ENCODE measurements at regions of chr2 and their contacts with region 1.

Region 1: GRCh38 chr2:189412330-189412953 is 28.8 kb upstream of the WDR75 start:
- DNase-seq: peak; percentile 61
- H3K4me3 Mint-ChIP-seq: peak overlapping the region; percentile 43
- H3K27ac Mint-ChIP-seq: peak overlapping the region; percentile 29
- H3K4me1 Mint-ChIP-seq: peaks cover 17% of the 10 kb centered on the region
- H3K27me3 Mint-ChIP-seq: no peaks in the 10 kb centered on the region
- CTCF ChIP-seq: peak; percentile 77

Region 2: GRCh38 chr2:188524519-188525113 is 887.8 kb before region 1 on chr2:
- CTCF ChIA-PET with region 1: interaction called, 7 read pairs
- POLR2A ChIA-PET with region 1: no interaction called
- intact Hi-C with region 1: loop called (anchors 1 kb)
- DNase-seq: peak; percentile 67
- H3K4me3 Mint-ChIP-seq: no peak overlapping the region
- H3K27ac Mint-ChIP-seq: no peak overlapping the region
- H3K4me1 Mint-ChIP-seq: peaks cover 7% of the 10 kb centered on the region
- H3K27me3 Mint-ChIP-seq: no peaks in the 10 kb centered on the region
- CTCF ChIP-seq: peak; percentile 73

Region 3: GRCh38 chr2:189096769-189097447 is 315.5 kb before region 1 on chr2:
- CTCF ChIA-PET with region 1: interaction called, 22 read pairs
- POLR2A ChIA-PET with region 1: no interaction called
- intact Hi-C with region 1: loop called (anchors 1 kb)
- DNase-seq: peak; percentile 42
- H3K4me3 Mint-ChIP-seq: no peak overlapping the region
- H3K27ac Mint-ChIP-seq: no peak overlapping the region
- H3K4me1 Mint-ChIP-seq: peaks cover 15% of the 10 kb centered on the region
- H3K27me3 Mint-ChIP-seq: no peaks in the 10 kb centered on the region
- CTCF ChIP-seq: no peak

Region 4: GRCh38 chr2:189142893-189143759 is 269.3 kb before region 1 on chr2:
- CTCF ChIA-PET with region 1: interaction called, 9 read pairs
- POLR2A ChIA-PET with region 1: interaction called, 3 read pairs
- intact Hi-C with region 1: loop called (anchors 1 kb)
- DNase-seq: peak; percentile 74
- H3K4me3 Mint-ChIP-seq: no peak overlapping the region
- H3K27ac Mint-ChIP-seq: peak overlapping the region; percentile 97
- H3K4me1 Mint-ChIP-seq: peaks cover 17% of the 10 kb centered on the region
- H3K27me3 Mint-ChIP-seq: no peaks in the 10 kb centered on the region
- CTCF ChIP-seq: peak; percentile 75

Region 5: DNA sequence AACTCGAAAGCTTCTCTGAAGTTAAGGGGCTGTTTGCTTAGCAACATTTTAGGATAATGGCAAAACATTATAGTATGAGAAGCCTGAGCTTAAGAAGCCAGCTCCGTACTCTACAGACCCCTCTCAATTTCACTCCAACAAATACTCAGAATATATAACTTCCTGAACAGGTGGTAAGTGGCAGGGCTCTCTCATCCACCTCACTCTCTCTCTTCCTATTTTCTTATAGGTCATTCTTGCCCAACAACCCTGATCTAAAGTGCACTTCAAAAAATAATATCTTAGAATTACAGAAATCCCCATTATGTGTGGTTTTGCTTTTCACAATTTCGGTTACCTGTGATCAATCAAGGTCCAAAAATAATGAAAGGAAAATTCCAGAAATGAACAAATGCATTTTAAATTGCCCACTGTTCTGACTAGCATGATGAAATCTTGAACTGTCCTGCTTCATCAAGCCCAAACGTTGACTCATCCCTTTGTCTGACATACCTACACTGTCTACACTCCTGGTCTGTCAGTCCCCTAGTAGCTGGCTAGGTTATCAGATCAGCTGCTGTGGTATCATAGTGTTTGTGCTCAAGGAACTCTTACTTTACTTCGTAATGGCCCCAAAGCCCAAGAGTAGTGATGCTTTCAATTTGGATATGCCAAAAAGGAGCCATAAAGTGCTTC is 110.0 kb before region 1 on chr2:
- CTCF ChIA-PET with region 1: interaction called, 4 read pairs
- POLR2A ChIA-PET with region 1: no interaction called
- intact Hi-C with region 1: loop called (anchors 5 kb)
- DNase-seq: peak; percentile 67
- H3K4me3 Mint-ChIP-seq: no peak overlapping the region
- H3K27ac Mint-ChIP-seq: peak overlapping the region; percentile 44
- H3K4me1 Mint-ChIP-seq: peaks cover 19% of the 10 kb centered on the region
- H3K27me3 Mint-ChIP-seq: no peaks in the 10 kb centered on the region
- CTCF ChIP-seq: no peak

Measured in MCF 10A (cell line).